Heart left ventricle (tissue), 16 donors: ENCODE measurements at regions of chr7 and their contacts with region 1.

Region 1: GRCh38 chr7:46932676-46933424 is 649.1 kb downstream of the TNS3 start:
- DNase-seq: peak in 3 of 5 donors; percentile 26 to 59 (median 37)
- ATAC-seq: peak; percentile 59 to 85 (median 73)
- H3K4me3 ChIP-seq: no peak overlapping the region
- H3K27ac ChIP-seq: peak overlapping the region in 10 of 12 donors; percentile 8 to 71 (median 37)
- H3K4me1 ChIP-seq: peaks cover 0 to 36% (median 20%) of the 10 kb centered on the region in 12 donors
- H3K27me3 ChIP-seq: no peaks in the 10 kb centered on the region
- CTCF ChIP-seq: peak in 6 of 12 donors; percentile 10 to 49 (median 22)
- POLR2A ChIP-seq: no peak

Region 2: GRCh38 chr7:46776790-46777189 is 156.1 kb before region 1 on chr7:
- intact Hi-C with region 1: loop called in 1 of 10 experiments (anchors 10 kb)
- DNase-seq: no peak
- ATAC-seq: no peak
- H3K4me3 ChIP-seq: no peak overlapping the region
- H3K27ac ChIP-seq: no peak overlapping the region
- H3K4me1 ChIP-seq: peaks cover 0 to 31% (median 15%) of the 10 kb centered on the region in 12 donors
- H3K27me3 ChIP-seq: no peaks in the 10 kb centered on the region
- CTCF ChIP-seq: peak in 11 of 12 donors; percentile 27 to 63 (median 52)
- POLR2A ChIP-seq: no peak